ENCODE measurements at regions of chr13 and their contacts with region 1.

Region 1: DNA sequence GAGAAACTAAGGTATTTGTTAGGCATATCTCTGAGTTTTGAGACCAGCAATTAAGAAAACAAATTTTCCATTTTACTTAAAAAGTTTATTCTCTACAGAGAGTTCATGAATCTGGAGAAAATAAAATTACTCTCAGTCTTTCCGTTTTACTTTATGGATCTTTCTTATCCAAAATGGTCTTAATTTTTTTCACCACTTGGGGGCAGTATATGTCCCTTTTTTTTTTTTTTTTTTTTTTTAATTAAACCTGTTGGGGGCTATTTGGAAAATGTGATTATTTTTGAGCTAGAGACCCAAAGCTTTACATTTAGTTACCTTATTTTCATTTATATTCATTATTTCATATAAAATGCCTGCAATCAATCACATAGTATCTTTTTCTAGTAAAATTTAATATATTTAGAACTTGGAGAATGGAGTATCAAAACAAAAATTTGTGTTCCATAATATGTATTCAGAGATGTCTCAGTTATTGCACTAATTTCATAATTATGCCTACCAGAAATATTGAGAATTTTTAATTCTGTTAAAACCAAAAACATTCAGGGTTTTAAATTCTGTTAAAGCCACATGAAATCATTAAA is 27.1 kb downstream of the PIBF1 start:
- DNase-seq: no peak
- H3K4me3 ChIP-seq: no peak overlapping the region
- H3K27ac ChIP-seq: no peak overlapping the region
- H3K4me1 ChIP-seq: no peaks in the 10 kb centered on the region
- H3K27me3 ChIP-seq: no peaks in the 10 kb centered on the region
- CTCF ChIP-seq: peak in 1 of 3 experiments; percentile 9; a peak in 1 of 4 replicates
- EP300 ChIP-seq: no peak
- POLR2A ChIP-seq: no peak
- RAD21 ChIP-seq: peak in 1 of 2 experiments; percentile 29; a peak in 2 of 4 replicates

Region 2: DNA sequence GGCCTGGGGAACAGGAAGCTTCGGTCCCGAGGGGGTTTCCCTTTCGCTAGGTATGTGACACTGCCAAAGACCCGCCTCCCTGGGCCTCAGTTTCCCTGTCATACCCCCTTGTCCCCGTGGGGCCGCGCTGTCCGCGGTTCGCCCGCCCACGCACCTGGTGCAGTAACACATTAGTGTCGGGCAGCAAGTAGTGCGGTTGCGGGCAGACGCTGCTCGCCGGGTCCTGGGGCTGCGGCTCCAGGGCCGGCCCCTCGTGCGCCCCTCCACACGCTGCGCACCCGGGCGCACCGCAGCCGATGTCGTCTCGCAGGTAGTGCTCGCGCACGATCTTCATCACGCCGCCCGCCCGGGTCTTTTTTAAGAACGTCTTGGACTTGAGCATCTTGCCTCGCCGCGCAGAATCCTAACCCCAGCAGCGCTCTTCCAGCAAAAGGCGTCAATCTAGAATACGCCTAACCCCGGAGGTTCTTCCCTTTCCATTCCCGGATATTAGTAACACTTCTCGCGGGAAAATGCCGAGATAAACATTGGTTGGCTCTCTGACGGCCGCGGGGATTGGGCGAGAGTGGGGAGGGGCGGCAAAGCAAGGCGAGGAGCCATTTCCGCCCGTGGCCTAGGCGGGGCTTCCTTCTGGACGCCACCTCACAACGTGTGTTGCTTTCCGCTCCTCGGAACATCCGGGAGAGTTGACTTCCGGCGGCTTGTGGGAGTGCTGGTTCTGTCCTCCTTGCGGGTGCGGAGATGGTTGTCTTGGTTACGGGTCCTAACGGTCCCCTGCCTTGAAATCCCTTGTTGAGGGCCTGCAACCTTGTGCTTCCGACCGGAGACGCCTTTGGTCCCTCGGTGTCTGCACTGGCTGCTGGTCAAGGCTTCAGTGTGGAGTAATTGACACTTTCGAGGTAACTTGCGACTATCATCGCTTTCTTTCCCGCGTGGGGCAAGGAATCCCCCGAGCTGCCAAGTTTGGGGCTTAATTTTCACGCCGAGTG is 27.3 kb before region 1 on chr13 and contains the starts of genes DIS3 and PIBF1:
- CTCF ChIA-PET with region 1: interaction called, 10 read pairs
- POLR2A ChIA-PET with region 1: no interaction called
- DNase-seq: peak; percentile 92
- H3K4me3 ChIP-seq: peak within 1 kb of the TSS; percentile 87 to 95 (median 90)
- H3K27ac ChIP-seq: peak within 1 kb of the TSS; percentile 82
- H3K4me1 ChIP-seq: no peaks in the 10 kb centered on the region; a peak in 2 of 7 replicates
- H3K27me3 ChIP-seq: no peaks in the 10 kb centered on the region
- CTCF ChIP-seq: peak in 2 of 3 experiments; percentile 0 to 17; a peak in 2 of 4 replicates
- EP300 ChIP-seq: no peak
- POLR2A ChIP-seq: peak in 1 of 2 experiments; percentile 86; a peak in 2 of 3 replicates
- RAD21 ChIP-seq: no peak
- total RNA-seq, gene DIS3: 38.4 and 39.9 TPM in 2 replicates
- total RNA-seq, gene PIBF1: 11.2 and 13.2 TPM in 2 replicates

Measured in H1 (cell line).